Activated CD8-positive, alpha-beta memory T cell treated with anti-CD3 and anti-CD28 coated beads, Interleukin-2, amount 10 ng/mL, durations not matched to agents 7 days and 5 days (primary cell): ENCODE measurements at regions of chr14 and their contacts with region 1.

Region 1: DNA sequence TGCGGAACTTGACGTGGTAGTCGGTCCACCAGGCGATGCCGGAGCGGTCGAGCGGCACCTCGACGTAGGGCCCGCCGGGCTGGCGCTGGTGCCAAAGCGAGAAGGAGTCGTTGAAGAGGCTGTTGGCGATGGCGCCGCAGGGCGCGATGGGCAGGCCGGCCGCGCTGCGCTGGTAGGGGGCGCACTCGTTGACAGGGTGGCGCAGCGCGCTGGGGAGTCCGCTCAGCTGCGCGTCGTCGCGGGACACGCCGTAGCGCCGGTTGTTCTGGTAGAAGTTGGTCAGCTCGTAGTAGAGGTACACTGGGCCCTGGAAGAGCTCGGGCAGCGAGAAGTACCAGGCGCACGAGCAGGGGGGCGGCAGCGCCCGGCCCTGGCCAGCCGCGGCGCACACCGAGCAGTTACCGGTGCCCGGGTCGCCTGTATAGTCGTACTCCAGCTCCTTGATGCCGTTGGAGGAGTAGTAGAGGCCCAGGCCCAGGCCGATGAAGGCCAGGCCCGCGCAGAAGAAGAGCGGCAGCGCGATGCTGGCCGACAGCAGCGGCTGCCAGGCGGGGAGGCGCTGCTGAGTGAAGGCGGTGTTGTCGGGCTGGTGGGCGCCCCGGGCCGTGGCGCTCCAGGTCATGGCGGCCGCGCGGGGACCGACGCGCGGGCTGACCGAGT is 482 bp downstream of the TMEM30B start:
- DNase-seq: peak; percentile 79
- ATAC-seq: peak; percentile 89
- H3K4me3 Mint-ChIP-seq: peak overlapping the region; percentile 87
- H3K27ac Mint-ChIP-seq: peak overlapping the region; percentile 79
- H3K4me1 Mint-ChIP-seq: peaks cover 45% of the 10 kb centered on the region
- H3K27me3 Mint-ChIP-seq: peaks cover 24% of the 10 kb centered on the region

Region 2: DNA sequence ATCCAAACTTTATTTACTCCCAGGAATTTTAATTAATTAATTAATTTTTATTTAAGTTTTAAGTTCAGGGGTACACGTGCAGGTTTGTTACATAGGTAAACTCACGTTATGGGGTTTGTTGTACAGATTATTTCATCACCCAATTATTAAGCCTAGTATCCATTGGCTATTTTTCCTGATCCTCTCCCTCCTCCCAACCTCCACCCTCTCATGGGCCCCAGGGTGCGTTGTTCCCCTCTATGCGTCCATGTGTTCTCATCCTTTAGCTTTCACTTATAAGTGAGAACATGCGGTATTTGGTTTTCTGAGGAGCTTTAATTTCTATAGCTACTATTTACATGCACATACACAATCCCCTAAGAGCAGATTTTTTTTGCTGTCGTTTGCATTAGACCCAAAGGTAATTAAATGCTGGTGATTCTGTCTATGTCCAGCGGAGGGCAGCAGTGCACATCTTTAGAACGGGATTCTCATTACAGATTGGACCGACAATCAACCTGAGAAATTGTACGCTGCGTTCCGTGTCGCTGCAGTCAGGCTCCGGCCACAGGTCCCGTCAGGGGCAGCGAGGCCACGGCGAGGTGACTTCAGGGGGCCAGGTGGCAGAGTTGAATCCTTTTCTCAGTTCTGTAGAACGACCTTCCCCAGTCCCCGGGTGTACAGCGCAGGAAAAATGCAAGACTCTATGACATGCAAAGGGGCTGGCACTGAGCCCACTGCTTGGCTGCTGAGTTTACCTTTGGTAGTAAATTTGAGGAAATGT is 11.2 kb before region 1 on chr14:
- CTCF ChIA-PET with region 1: interaction called, 136 read pairs
- DNase-seq: peak; percentile 87
- ATAC-seq: peak; percentile 94
- H3K4me3 Mint-ChIP-seq: peak overlapping the region; percentile 63
- H3K27ac Mint-ChIP-seq: no peak overlapping the region
- H3K4me1 Mint-ChIP-seq: peaks cover 8% of the 10 kb centered on the region
- H3K27me3 Mint-ChIP-seq: peaks cover 60% of the 10 kb centered on the region